Sigmoid colon (tissue), 7 donors: ENCODE measurements at regions of chr11 and their contacts with region 1.

Region 1: DNA sequence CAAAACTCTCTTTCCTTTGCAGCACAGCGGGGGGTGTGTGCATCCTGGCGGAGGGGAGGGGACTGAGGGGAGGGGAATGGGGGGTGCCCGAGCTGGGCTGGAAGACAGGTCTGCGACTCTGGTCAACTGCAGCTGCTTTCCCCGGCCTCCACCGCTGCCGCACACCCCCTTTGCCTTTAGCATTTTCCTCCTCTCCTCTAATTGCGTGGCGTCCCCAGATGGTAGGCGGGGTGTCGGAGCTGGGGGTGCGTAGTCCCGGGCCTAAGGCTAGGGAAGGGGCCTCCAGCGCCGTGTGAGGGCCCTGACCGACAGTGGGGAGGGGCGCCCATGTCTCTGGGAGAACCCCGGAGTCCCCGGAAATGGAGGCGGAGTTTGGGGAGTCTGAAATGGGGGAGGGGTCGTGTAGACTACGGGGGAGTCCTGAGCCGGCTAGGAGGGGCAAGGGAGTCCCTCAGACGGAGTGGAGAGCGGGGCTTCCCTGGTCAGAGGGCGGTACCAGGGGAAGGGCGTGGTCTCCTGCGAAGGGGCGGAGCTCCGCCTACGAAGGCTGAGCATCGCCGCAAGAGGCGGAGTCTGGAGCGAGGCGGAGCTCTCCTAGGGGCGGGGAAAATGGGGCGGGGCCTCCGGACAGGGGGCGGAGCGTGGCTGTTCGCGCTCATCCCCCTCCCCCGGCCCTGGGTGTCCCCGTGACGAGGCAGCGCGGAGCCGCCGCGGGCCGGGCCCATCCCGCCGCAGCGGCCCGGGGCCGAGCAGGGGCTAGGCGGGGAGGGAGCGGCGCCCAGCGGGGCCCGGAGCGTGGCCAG is at the start of gene PELI3:
- DNase-seq: peak; percentile 97
- H3K4me3 ChIP-seq: peak within 1 kb of the TSS; percentile 55 to 92 (median 80)
- H3K27ac ChIP-seq: peak within 1 kb of the TSS; percentile 80 to 87 (median 84)
- H3K4me1 ChIP-seq: peaks cover 0 to 25% (median 18%) of the 10 kb centered on the region in 4 donors
- H3K27me3 ChIP-seq: no peaks in the 10 kb centered on the region
- CTCF ChIP-seq: no peak
- EP300 ChIP-seq: no peak
- POLR2A ChIP-seq: peak in 1 of 2 donors; percentile 53
- total RNA-seq, gene PELI3: 16.9 to 26.4 (median 23.0) TPM

Region 2: GRCh38 chr11:66438504-66439466 is 27.6 kb before region 1 on chr11 and contains the start of gene MRPL11:
- intact Hi-C with region 1: loop called (anchors 2 kb)
- DNase-seq: peak; percentile 91
- H3K4me3 ChIP-seq: peak within 1 kb of the TSS; percentile 54 to 88 (median 74)
- H3K27ac ChIP-seq: peak within 1 kb of the TSS; percentile 83 to 90 (median 87)
- H3K4me1 ChIP-seq: peaks cover 0 to 10% (median 8%) of the 10 kb centered on the region in 4 donors
- H3K27me3 ChIP-seq: no peaks in the 10 kb centered on the region
- CTCF ChIP-seq: peak; percentile 27 to 41 (median 38)
- EP300 ChIP-seq: no peak
- POLR2A ChIP-seq: no peak
- total RNA-seq, gene MRPL11: 54.2 to 77.8 (median 61.3) TPM

Region 3: DNA sequence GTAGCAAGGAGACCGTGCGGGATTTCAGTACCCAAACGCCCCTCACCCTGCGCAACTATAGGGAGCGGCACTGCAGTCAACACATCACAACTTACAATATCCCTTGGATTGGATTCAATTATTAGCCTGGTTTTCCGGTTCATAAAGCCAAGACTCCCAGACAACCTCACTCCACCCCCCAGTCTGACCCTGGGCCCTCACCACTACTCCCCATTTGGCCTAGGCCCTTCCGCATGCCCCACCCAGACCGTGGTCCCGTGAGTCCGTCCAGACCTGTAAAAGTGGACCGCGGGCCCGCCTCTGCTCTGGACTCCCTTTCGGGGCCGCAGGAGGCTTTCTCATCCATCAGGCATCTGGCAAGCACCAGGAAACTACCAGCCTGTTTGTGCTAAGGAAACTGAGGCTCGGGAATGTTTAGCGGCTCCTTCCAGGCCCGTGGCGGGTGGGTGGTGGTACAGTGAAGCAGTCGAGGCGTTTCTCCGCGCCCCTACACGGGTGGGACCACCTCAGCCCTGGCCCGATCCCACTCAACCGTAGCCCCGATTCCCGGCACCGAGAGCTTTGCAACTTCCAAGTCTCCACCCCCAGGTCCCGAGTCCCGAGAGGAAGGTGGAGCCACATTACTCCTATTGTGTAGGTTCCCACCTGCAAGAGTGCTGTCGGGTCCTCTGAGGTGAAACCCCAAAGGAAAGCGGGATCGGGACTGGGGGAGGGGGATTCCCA is 13.1 kb after region 1 on chr11:
- intact Hi-C with region 1: loop called (anchors 1 kb)
- DNase-seq: peak; percentile 81
- H3K4me3 ChIP-seq: peak overlapping the region; percentile 56 to 75 (median 64)
- H3K27ac ChIP-seq: peak overlapping the region; percentile 90 to 93 (median 92)
- H3K4me1 ChIP-seq: peaks cover 0 to 21% (median 11%) of the 10 kb centered on the region in 4 donors
- H3K27me3 ChIP-seq: no peaks in the 10 kb centered on the region
- CTCF ChIP-seq: no peak
- EP300 ChIP-seq: no peak
- POLR2A ChIP-seq: no peak